ENCODE measurements at regions of chrX and their contacts with region 1.

Region 1: DNA sequence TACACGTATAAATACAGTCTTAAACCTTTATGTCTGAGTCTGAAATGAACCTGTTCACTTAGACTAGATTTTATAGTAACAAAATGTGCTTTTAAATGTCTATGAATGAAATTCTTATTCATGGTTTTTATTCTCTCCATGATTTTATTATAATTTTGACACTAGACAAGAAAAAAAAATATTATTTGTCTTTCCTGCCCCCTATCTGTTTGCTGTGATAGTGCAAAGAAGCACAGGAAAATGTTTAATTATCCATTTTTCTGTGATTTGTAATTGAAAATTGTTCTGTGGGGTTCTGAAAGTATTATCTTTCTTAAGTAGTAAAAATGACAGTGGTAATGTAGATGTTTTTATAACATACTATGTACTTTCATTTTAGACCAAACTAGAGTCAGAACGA is 52.0 kb downstream of the INTS6L start:
- DNase-seq: no peak
- H3K4me3 ChIP-seq: no peak overlapping the region
- H3K27ac ChIP-seq: no peak overlapping the region
- H3K4me1 ChIP-seq: no peaks in the 10 kb centered on the region
- H3K27me3 ChIP-seq: no peaks in the 10 kb centered on the region
- CTCF ChIP-seq: peak in 10 of 11 experiments; percentile 8 to 49 (median 28)
- POLR2A ChIP-seq: no peak

Region 2: DNA sequence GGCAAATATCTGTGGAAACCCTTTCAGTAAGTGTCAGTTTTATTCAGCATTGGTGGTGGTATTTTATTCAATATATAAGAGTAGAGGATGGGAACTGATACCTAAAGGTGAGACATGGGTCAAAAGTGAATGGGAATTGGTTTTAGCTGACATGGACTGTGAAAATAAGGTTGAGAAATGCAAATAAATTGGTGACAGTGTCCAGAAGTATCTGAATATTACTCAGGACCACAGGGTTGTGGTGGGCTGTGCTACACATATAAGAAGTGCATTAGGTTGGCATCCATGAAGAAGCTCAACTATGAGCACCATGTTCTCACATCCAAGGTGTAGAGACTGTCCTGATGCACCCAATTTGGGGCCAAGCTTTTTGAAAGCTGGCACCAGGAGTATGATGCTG is 218.1 kb before region 1 on chrX:
- intact Hi-C with region 1: no loop called
- DNase-seq: no peak
- H3K4me3 ChIP-seq: no peak overlapping the region
- H3K27ac ChIP-seq: no peak overlapping the region
- H3K4me1 ChIP-seq: no peaks in the 10 kb centered on the region
- H3K27me3 ChIP-seq: no peaks in the 10 kb centered on the region
- CTCF ChIP-seq: no peak
- POLR2A ChIP-seq: no peak

Region 3: DNA sequence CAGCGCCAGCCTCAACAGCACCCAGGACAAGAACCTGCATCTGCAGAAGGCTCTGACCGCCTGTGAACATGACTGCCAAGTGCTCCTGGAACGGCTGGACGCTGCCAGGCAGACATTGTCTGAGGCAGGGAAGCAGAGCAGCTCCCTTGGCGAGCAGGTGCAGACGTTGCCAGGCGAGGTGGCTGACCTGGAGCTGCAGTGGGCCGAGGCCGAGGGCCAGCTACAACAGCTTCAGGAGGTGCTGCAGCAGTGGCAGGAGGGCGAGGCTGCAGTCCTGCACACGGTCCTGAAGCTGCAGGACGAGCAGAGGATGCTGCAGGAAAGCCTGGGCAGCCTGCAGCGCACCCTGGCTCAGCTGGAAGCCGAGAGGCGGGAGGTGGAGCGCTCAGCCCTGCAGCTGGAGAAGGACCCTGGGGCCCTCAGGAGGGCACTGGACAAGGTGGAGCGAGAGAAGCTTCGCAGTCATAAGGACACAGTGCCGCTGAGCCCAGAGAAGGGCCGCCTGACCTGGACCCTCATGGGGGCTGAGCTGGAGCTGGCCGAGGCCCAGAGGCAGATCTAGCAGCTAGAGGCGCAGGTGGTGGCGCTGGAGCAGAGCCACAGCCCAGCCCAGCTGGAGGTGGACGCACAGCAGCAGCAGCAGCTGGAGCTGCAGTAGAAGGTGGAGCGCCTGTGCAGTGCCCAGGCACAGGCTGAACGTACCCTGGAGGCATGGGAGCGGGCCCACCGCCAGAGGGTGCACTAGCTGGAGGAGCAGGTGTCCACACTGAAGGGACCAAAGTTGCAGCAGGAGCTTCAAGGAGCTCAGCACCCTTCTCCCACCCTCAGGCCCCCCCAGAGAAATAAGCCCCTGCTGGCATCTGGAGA is 134.3 kb before region 1 on chrX:
- intact Hi-C with region 1: no loop called
- DNase-seq: peak; percentile 64
- H3K4me3 ChIP-seq: no peak overlapping the region
- H3K27ac ChIP-seq: no peak overlapping the region
- H3K4me1 ChIP-seq: no peaks in the 10 kb centered on the region
- H3K27me3 ChIP-seq: peaks cover 0 to 3% (median 0%) of the 10 kb centered on the region in 7 donors
- CTCF ChIP-seq: no peak
- POLR2A ChIP-seq: no peak

Region 4: DNA sequence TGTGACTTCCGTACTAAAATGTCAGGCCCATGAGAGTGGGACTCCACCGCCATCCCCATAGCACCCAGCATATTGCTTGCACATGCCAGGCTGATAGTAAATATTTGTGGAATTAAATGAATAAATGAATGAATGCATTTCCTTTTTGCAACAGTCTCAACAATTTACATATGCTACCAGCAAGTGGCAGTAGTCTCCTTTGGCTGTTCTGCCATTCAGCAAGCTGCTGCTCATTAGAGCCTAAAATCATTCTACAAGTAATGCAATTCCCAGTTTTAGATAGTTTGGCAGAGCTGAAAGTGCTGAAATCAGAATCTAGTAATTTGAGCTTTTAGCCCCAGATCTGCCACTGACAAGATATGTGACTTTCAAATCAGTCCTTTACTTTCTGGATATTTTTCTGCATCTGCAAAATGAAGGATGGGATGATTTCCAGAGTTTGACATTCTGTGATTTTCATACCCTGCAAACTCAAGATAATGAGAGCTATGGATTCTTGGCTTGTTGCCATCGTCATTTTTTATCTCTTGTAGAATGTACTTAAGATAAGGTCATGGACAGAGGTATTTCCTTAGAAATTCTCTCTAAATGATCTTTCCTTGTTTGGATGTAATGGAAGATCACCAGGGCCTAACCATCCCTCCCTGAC is 87.7 kb before region 1 on chrX:
- intact Hi-C with region 1: loop called (anchors 10 kb)
- DNase-seq: no peak
- H3K4me3 ChIP-seq: no peak overlapping the region
- H3K27ac ChIP-seq: no peak overlapping the region
- H3K4me1 ChIP-seq: no peaks in the 10 kb centered on the region
- H3K27me3 ChIP-seq: peaks cover 0 to 5% (median 0%) of the 10 kb centered on the region in 7 donors
- CTCF ChIP-seq: peak in 10 of 11 experiments; percentile 28 to 57 (median 50)
- POLR2A ChIP-seq: no peak

Region 5: DNA sequence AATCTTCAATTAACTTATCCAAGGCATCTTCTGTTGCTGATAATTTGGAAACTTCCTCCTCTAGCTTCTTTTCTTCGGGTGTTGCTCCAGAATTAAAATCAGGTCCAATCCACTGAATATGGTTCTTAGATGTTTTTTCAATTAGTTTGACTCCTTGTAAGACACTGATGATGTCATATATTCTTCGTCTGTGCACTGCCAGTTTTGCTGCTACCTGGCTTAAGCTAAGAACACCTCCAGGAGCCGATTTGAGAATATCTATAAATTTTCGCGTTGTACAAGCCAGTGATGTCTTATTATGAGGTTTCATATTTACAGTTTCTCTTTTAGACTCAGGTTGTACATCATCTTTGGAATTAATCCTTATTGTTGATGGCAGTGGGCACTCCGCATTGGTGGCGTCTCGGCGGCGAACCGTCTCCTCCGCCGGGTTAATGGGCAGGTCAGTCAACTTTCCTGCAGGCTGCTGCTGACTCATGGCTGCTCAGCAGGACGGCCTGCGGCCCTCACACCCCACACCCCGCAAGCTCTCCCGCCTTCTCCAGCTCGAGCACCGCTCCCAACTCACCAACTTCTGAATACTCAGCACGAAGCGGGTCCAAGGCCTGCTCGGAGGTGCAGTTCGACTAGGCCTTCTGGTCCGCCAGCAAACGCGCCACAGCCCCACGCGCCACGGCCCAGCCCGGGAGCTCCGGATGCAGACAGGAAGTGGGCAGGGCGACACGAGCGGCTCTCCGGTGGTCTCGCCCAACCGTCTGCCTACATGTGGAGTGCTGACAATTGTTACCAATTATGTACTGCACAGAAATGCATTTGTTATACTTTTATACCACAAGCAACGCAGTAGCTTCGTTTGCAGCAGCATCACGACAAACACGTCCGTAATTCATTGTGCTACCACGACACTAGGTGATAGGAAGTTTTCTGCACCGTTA is 525.7 kb after region 1 on chrX:
- intact Hi-C with region 1: no loop called
- DNase-seq: no peak
- H3K4me3 ChIP-seq: no peak overlapping the region
- H3K27ac ChIP-seq: no peak overlapping the region
- H3K4me1 ChIP-seq: no peaks in the 10 kb centered on the region
- H3K27me3 ChIP-seq: no peaks in the 10 kb centered on the region
- CTCF ChIP-seq: no peak
- POLR2A ChIP-seq: no peak

Measured in spleen (tissue), 13 donors.